ENCODE measurements at regions of chr11 and their contacts with region 1.

Region 1: GRCh38 chr11:61792310-61793085 is at the starts of genes FEN1 and TMEM258:
- DNase-seq: peak; percentile 86 to 89 (median 87)
- H3K4me3 ChIP-seq: peak within 1 kb of the TSS; percentile 68 to 77 (median 73)
- H3K4me3 Mint-ChIP-seq: peak within 1 kb of the TSS; percentile 90 to 99
- H3K27ac ChIP-seq: peak within 1 kb of the TSS; percentile 87 to 98
- H3K27ac Mint-ChIP-seq: peak within 1 kb of the TSS; percentile 99 to 100 (median 100)
- H3K4me1 ChIP-seq: peaks cover 16 to 26% of the 10 kb centered on the region in 2 donors
- H3K4me1 Mint-ChIP-seq: peaks cover 21% of the 10 kb centered on the region
- H3K27me3 ChIP-seq: no peaks in the 10 kb centered on the region
- H3K27me3 Mint-ChIP-seq: no peaks in the 10 kb centered on the region
- CTCF ChIP-seq: no peak
- polyA plus RNA-seq, gene FEN1: 3.5 to 6.4 (median 4.3) TPM
- polyA plus RNA-seq, gene TMEM258: 199 to 224 (median 220) TPM

Region 2: DNA sequence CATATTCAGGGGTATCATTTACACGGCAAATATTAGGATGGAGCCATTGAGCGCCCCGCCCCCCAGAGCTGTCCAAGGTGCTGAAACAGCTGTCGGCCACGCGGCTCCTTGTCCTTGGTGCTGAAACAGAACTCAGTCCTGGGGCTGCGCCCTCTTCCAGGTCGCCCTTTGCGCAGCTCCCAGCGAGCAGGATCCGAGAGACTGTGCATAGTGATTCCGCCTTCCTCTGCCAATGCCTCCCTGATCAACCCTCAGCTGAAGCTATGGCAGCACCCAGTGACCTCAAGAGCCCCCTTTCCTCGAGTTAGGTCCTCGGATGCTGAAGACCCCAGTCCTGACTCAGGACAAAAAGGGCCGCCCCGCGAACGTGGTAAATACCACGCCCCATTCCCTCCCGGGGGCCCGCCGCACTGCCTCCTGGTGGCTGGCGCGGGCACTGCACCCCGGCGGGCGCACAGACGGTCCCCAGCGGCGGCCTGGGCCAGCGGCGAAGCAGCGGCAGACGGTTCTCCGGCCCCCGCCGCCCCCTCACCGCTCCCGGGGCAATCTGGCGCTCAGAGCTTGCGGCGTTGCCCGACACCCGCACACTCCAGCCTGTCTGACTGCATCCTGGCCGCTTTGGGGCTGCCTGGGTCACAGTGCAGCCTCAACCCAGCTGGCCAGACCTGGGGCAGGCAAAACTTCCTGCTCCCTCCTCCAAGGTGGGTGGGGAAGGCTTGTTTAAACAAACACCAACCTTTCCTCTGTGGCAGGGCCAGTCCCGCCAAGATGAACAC is 225.0 kb before region 1 on chr11:
- intact Hi-C with region 1: no loop called
- DNase-seq: peak; percentile 46 to 53 (median 49)
- H3K4me3 ChIP-seq: no peak overlapping the region
- H3K4me3 Mint-ChIP-seq: peak overlapping the region in 1 of 2 donors; percentile 62
- H3K27ac ChIP-seq: no peak overlapping the region
- H3K27ac Mint-ChIP-seq: peak overlapping the region in 2 of 7 donors; percentile 37 to 51
- H3K4me1 ChIP-seq: no peaks in the 10 kb centered on the region
- H3K4me1 Mint-ChIP-seq: no peaks in the 10 kb centered on the region
- H3K27me3 ChIP-seq: peaks cover 0 to 12% of the 10 kb centered on the region in 2 donors
- H3K27me3 Mint-ChIP-seq: peaks cover 12 to 41% (median 29%) of the 10 kb centered on the region in 3 donors
- CTCF ChIP-seq: no peak

Region 3: GRCh38 chr11:61816736-61817455 is 24.4 kb after region 1 on chr11 and contains the start of gene FADS1:
- intact Hi-C with region 1: loop called in 1 of 2 experiments (anchors 2 kb)
- DNase-seq: peak; percentile 93 to 96 (median 94)
- H3K4me3 ChIP-seq: peak within 1 kb of the TSS; percentile 74 to 90 (median 75)
- H3K4me3 Mint-ChIP-seq: peak within 1 kb of the TSS; percentile 94 to 98
- H3K27ac ChIP-seq: peak within 1 kb of the TSS; percentile 95 to 96
- H3K27ac Mint-ChIP-seq: peak within 1 kb of the TSS; percentile 97 to 99 (median 98)
- H3K4me1 ChIP-seq: peaks cover 20 to 35% of the 10 kb centered on the region in 2 donors
- H3K4me1 Mint-ChIP-seq: peaks cover 17% of the 10 kb centered on the region
- H3K27me3 ChIP-seq: no peaks in the 10 kb centered on the region
- H3K27me3 Mint-ChIP-seq: peaks cover 2 to 5% (median 3%) of the 10 kb centered on the region in 3 donors
- CTCF ChIP-seq: peak; percentile 76
- polyA plus RNA-seq, gene FADS1: 10.6 to 31.8 (median 29.2) TPM

Region 4: GRCh38 chr11:61871158-61871597 is 78.7 kb after region 1 on chr11:
- intact Hi-C with region 1: loop called in 1 of 2 experiments (anchors 2 kb)
- DNase-seq: peak; percentile 47 to 60 (median 57)
- H3K4me3 ChIP-seq: no peak overlapping the region
- H3K4me3 Mint-ChIP-seq: peak overlapping the region in 1 of 2 donors; percentile 75
- H3K27ac ChIP-seq: no peak overlapping the region
- H3K27ac Mint-ChIP-seq: peak overlapping the region in 1 of 7 donors; percentile 38
- H3K4me1 ChIP-seq: peaks cover 3 to 5% of the 10 kb centered on the region in 2 donors
- H3K4me1 Mint-ChIP-seq: peaks cover 7% of the 10 kb centered on the region
- H3K27me3 ChIP-seq: peaks cover 0 to 13% of the 10 kb centered on the region in 2 donors
- H3K27me3 Mint-ChIP-seq: peaks cover 7 to 19% (median 13%) of the 10 kb centered on the region in 3 donors
- CTCF ChIP-seq: peak; percentile 96

Region 5: DNA sequence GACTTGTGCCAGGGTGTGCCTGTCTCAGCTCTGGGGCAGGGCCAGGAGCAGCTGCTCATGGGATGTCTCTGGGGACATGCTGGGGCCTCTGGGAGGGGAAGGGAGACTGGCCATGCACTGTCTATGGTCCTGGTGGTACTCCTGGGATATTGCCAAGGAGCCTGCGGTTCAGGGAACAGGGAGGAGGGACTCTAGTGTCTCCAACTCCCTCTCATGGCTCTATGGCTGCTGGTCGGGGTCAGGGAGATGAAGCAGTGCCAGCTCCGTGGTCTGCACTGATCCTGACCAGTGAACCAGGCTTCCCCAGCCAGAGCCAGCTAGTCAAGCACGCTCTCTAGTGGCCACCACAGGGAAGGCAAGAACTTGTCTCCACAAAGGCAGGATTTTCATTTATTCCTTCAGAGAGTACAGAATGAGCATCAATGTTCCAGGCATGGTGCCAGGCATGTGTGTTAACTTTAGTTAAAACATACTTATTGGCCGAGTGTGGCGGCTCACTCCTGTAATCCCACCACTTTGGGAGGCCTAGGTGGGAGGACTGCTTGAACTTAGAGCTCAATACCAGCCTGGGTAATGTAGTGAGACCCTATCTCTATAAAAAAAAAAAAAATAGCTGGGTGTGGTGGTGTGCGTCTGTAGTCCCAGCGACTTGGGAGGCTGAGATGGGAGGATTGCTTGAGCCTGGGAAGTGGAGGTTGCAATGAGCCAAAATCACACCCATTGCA is 155.2 kb after region 1 on chr11:
- intact Hi-C with region 1: loop called in 1 of 2 experiments (anchors 5 kb)
- DNase-seq: peak; percentile 68 to 83 (median 76)
- H3K4me3 ChIP-seq: no peak overlapping the region
- H3K4me3 Mint-ChIP-seq: no peak overlapping the region
- H3K27ac ChIP-seq: no peak overlapping the region
- H3K27ac Mint-ChIP-seq: no peak overlapping the region
- H3K4me1 ChIP-seq: peaks cover 10 to 12% of the 10 kb centered on the region in 2 donors
- H3K4me1 Mint-ChIP-seq: peaks cover 17% of the 10 kb centered on the region
- H3K27me3 ChIP-seq: no peaks in the 10 kb centered on the region
- H3K27me3 Mint-ChIP-seq: peaks cover 0 to 6% (median 3%) of the 10 kb centered on the region in 3 donors
- CTCF ChIP-seq: peak; percentile 90

Region 6: GRCh38 chr11:62123669-62124185 is 331.2 kb after region 1 on chr11 and contains the start of gene INCENP:
- intact Hi-C with region 1: loop called in 1 of 2 experiments (anchors 5 kb)
- DNase-seq: peak; percentile 97 to 98 (median 98)
- H3K4me3 ChIP-seq: peak within 1 kb of the TSS; percentile 82 to 97 (median 96)
- H3K4me3 Mint-ChIP-seq: peak within 1 kb of the TSS; percentile 91 to 96
- H3K27ac ChIP-seq: peak within 1 kb of the TSS in 1 of 2 donors; percentile 68
- H3K27ac Mint-ChIP-seq: peak within 1 kb of the TSS; percentile 79 to 94 (median 89)
- H3K4me1 ChIP-seq: peaks cover 17 to 26% of the 10 kb centered on the region in 2 donors
- H3K4me1 Mint-ChIP-seq: peaks cover 24% of the 10 kb centered on the region
- H3K27me3 ChIP-seq: no peaks in the 10 kb centered on the region
- H3K27me3 Mint-ChIP-seq: peaks cover 0 to 4% (median 4%) of the 10 kb centered on the region in 3 donors
- CTCF ChIP-seq: no peak
- polyA plus RNA-seq, gene INCENP: 0.75 to 7.0 (median 1.0) TPM

Measured in CD14-positive monocyte (primary cell).